ENCODE measurements at regions of chr2 and their contacts with region 1.

Region 1: GRCh38 chr2:206800506-206801417 is 35.4 kb downstream of the FASTKD2 start:
- DNase-seq: peak in 1 of 2 experiments; percentile 61
- H3K4me3 ChIP-seq: no peak overlapping the region
- H3K27ac ChIP-seq: no peak overlapping the region
- H3K4me1 ChIP-seq: peaks cover 14 to 18% (median 15%) of the 10 kb centered on the region in 4 experiments
- H3K27me3 ChIP-seq: no peaks in the 10 kb centered on the region
- CTCF ChIP-seq: peak; percentile 31 to 68 (median 67)
- EP300 ChIP-seq: no peak
- POLR2A ChIP-seq: no peak
- RAD21 ChIP-seq: peak; percentile 91

Region 2: GRCh38 chr2:206790311-206790935 is 10.3 kb before region 1 on chr2:
- CTCF ChIA-PET with region 1: interaction called, 81 read pairs
- POLR2A ChIA-PET with region 1: interaction called, 11 read pairs
- DNase-seq: no peak
- H3K4me3 ChIP-seq: no peak overlapping the region
- H3K27ac ChIP-seq: no peak overlapping the region
- H3K4me1 ChIP-seq: no peaks in the 10 kb centered on the region
- H3K27me3 ChIP-seq: no peaks in the 10 kb centered on the region
- CTCF ChIP-seq: no peak
- EP300 ChIP-seq: no peak
- POLR2A ChIP-seq: no peak
- RAD21 ChIP-seq: no peak

Region 3: DNA sequence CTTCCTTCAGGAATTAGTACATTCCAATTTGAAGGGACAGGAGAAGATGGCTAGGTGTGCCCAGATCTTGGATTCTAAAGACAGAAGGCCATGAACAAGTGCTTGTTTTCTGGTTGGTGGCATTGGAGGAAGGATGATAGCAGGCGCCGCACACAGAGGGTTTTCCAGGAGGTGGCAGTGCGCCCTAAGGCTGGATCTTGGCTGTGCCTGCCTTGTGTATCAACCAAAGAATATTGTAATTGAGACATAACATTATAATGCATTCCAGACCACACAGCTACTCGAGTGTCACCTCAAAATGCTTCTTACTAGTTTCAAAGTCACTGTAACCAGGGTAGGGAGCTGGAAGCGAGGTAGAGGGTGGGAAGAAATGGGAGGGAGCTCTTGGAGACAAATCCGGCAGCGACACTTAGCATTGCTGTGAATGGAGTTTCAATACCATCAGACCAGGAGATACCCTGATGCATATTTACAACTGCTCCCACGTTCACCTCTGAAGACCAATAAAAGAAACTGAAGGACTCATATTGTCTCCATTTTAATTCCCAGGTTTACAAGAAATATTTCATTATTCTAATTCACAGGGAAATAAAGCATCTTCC is 181.1 kb after region 1 on chr2:
- CTCF ChIA-PET with region 1: interaction called, 38 read pairs
- POLR2A ChIA-PET with region 1: no interaction called
- DNase-seq: peak; percentile 56 to 78
- H3K4me3 ChIP-seq: no peak overlapping the region
- H3K27ac ChIP-seq: no peak overlapping the region
- H3K4me1 ChIP-seq: peaks cover 0 to 13% (median 12%) of the 10 kb centered on the region in 4 experiments; a peak in 5 of 7 replicates
- H3K27me3 ChIP-seq: no peaks in the 10 kb centered on the region
- CTCF ChIP-seq: peak; percentile 77 to 93 (median 86)
- EP300 ChIP-seq: no peak
- POLR2A ChIP-seq: no peak
- RAD21 ChIP-seq: peak; percentile 98

Region 4: DNA sequence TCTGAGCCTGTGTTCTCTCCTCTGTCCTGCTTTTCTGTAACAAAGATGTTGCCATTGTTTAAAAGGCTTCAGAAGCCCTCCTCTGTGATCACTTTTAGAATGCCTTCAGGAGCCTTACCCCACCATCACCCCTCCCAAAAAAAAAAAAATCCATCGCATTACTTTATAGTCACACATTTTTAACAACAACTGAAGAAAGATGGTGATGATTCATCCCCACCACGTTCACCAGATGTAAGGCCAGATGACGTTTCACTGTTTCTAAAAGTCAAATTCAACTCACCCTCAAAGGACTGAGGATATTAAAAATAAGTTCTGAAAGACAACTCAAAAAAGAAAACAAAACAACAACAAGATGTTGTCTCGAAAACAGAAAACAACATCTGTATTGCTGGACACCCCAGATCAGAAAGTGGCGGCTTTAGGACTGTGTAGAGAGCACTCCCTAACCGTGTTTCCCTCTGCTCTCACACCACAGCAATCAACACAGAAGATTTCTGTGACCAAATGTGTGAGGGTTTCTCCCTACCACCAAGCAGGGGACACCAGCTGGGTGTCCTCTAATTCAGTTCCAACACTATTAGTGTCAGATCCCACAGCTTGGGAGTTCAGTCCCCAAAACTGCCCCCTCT is 667.1 kb after region 1 on chr2:
- CTCF ChIA-PET with region 1: interaction called, 22 read pairs
- POLR2A ChIA-PET with region 1: no interaction called
- DNase-seq: no peak
- H3K4me3 ChIP-seq: no peak overlapping the region
- H3K27ac ChIP-seq: no peak overlapping the region
- H3K4me1 ChIP-seq: peaks cover 0 to 5% (median 3%) of the 10 kb centered on the region in 4 experiments; a peak in 3 of 7 replicates
- H3K27me3 ChIP-seq: no peaks in the 10 kb centered on the region
- CTCF ChIP-seq: no peak
- EP300 ChIP-seq: no peak
- POLR2A ChIP-seq: no peak
- RAD21 ChIP-seq: no peak